ENCODE measurements at regions of chr3 and their contacts with region 1.

Region 1: GRCh38 chr3:38165681-38166392 is 500 bp downstream of the OXSR1 start:
- DNase-seq: no peak
- ATAC-seq: peak; percentile 35
- H3K4me3 ChIP-seq: peak overlapping the region; percentile 73 to 84
- H3K27ac ChIP-seq: peak overlapping the region; percentile 98
- H3K4me1 ChIP-seq: peaks cover 17% of the 10 kb centered on the region
- H3K27me3 ChIP-seq: no peaks in the 10 kb centered on the region
- CTCF ChIP-seq: no peak

Region 2: DNA sequence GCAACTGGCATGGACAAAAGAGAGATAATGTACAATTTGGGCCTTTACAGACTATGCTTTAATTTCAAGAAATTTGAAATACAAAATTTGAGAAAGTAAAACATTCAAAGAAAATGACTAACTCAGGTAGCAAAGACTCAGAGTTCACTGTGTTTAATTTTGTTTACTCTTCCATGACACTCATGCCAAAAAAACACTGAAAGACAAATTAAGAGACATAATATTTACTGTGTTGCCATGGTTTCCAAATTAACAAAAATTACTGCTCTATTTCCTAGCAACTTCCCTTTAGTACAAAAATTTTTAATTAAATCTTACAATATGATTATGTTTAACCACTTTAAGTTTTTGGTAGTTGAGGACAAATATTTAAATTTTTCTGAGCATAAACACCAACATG is 1021.0 kb before region 1 on chr3:
- CTCF ChIA-PET with region 1: no interaction called
- POLR2A ChIA-PET with region 1: no interaction called
- in situ Hi-C with region 1: no loop called
- intact Hi-C with region 1: no loop called
- DNase-seq: no peak
- ATAC-seq: no peak
- H3K4me3 ChIP-seq: no peak overlapping the region
- H3K27ac ChIP-seq: no peak overlapping the region
- H3K4me1 ChIP-seq: no peaks in the 10 kb centered on the region
- H3K27me3 ChIP-seq: no peaks in the 10 kb centered on the region
- CTCF ChIP-seq: no peak

Region 3: DNA sequence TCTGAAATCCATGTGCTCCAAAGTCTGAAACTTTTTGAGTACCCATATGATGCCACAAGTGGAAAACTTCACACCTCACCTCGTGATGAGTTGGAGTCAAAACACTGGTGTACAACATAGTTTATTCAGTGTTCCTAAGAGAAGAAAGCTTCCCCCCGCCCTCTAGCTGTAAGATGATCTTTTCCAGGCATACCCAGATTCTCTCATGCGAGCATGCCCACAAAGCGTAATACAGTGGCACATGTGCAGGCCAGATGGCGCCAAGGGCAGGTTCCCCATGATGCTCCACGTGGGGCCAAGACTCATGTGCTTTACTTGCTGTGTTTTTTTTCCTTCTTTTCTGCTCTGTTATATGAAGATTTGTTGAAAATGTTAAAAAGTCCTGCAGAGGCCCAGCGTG is 886.6 kb before region 1 on chr3:
- CTCF ChIA-PET with region 1: no interaction called
- POLR2A ChIA-PET with region 1: interaction called, 10 read pairs
- in situ Hi-C with region 1: no loop called
- intact Hi-C with region 1: no loop called
- DNase-seq: no peak
- ATAC-seq: no peak
- H3K4me3 ChIP-seq: no peak overlapping the region
- H3K27ac ChIP-seq: no peak overlapping the region
- H3K4me1 ChIP-seq: no peaks in the 10 kb centered on the region
- H3K27me3 ChIP-seq: no peaks in the 10 kb centered on the region
- CTCF ChIP-seq: no peak

Region 4: DNA sequence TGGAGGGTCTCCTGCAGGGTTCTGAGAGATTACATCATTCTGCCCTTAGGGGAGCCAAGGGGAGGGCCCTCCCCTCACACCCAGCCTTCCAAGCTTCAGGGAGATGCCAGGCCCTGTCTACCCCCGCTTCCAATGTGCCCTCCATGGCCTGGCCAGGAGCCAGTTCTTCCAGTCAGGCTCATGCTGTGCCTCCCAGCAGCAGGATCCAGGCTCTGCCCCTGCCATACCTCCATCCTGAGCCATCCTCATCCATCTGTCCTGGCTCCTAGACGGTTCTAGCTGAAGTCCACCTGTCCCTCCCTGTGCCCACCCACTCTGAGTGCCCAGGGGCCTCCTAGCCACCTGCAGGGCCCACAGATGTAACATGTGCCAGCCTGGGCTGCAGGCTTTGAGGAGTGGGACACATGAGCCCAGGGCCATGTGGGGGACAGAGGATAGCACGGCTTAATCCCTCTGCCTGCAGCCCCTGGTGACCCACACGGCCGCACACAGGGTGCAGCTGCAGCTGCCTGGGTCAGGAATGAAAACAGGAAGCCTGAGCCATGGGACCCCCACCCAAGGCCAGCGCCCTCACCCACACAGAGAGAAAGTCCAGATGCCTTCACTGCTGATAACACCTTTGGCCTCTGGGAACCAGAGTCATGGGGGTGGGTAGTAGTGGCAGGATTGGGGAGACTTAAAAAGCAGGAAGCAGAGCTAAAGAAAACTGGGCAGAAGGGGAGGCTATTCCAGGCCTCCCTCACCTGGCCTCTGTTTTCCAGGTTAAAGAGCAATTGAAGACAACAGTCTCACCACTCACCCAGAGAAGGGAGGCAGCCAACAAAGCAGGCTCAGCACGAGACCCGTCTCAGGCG is 148.2 kb before region 1 on chr3:
- CTCF ChIA-PET with region 1: no interaction called
- POLR2A ChIA-PET with region 1: interaction called, 13 read pairs
- in situ Hi-C with region 1: no loop called
- intact Hi-C with region 1: no loop called
- DNase-seq: no peak
- ATAC-seq: no peak
- H3K4me3 ChIP-seq: no peak overlapping the region
- H3K27ac ChIP-seq: no peak overlapping the region
- H3K4me1 ChIP-seq: no peaks in the 10 kb centered on the region
- H3K27me3 ChIP-seq: no peaks in the 10 kb centered on the region
- CTCF ChIP-seq: no peak

Region 5: DNA sequence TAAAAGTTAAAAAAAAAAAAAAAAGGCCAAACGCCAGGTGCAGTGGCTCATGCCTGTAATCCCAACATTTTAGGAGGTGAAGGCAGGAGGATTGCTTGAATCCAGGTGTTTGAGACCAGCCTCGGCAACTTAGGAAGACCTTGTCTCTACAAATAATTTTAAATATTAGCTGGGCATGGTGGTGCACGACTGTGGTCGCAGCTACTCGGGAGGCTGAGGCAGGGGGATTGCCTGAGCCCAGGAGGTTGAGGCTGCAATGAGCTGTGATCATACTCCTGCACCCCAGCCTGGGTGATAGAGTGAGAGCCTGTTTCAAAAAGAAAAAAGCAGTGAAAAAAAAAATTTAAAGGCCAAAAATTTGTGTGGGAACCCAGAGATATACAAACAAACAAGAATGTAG is 129.6 kb before region 1 on chr3:
- CTCF ChIA-PET with region 1: no interaction called
- POLR2A ChIA-PET with region 1: interaction called, 21 read pairs
- in situ Hi-C with region 1: no loop called
- intact Hi-C with region 1: no loop called
- DNase-seq: no peak
- ATAC-seq: no peak
- H3K4me3 ChIP-seq: no peak overlapping the region
- H3K27ac ChIP-seq: no peak overlapping the region
- H3K4me1 ChIP-seq: no peaks in the 10 kb centered on the region; the same call in 1 of the 2 replicates
- H3K27me3 ChIP-seq: no peaks in the 10 kb centered on the region
- CTCF ChIP-seq: no peak

Region 6: DNA sequence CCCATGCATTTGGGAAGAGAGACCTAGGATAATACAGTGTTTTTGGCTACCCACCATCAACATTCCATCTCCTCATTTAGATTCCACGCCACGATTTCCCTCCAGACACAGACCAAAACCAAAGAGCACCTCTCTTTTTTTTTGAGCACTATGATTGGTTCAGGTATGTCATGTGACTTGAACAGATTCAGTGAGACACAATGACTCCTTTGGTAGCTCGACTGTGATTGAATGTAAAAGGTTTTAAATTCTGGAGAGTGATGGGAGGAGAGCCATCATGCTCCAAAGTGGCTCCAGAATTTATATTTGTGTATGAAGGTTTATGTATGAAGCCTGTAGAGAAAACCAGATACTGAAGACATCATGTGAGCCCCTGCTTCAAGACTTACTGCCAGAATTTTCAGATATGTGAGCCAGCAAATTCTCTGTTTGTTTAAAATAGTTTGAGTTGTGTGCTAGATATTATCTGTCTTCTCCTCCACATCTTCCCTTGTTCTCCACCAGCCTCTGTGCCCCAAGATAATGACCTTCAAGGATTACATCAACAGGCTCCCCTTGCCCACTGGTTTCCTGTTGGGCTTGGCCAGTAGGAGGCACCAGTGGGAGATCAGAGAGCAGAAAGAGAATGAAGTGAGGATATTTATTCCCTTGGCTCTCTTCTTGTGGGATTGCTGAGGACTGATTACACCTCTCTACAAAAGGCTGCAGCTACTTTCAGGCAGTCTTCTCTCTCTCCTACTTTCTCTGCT is 14.9 kb before region 1 on chr3:
- CTCF ChIA-PET with region 1: no interaction called
- POLR2A ChIA-PET with region 1: no interaction called
- in situ Hi-C with region 1: no loop called
- intact Hi-C with region 1: no loop called
- DNase-seq: no peak
- ATAC-seq: no peak
- H3K4me3 ChIP-seq: no peak overlapping the region
- H3K27ac ChIP-seq: no peak overlapping the region
- H3K4me1 ChIP-seq: no peaks in the 10 kb centered on the region
- H3K27me3 ChIP-seq: no peaks in the 10 kb centered on the region
- CTCF ChIP-seq: peak; percentile 13; the same call in 1 of the 2 replicates

Region 7: GRCh38 chr3:38519000-38519399 is 353.2 kb after region 1 on chr3:
- CTCF ChIA-PET with region 1: no interaction called
- POLR2A ChIA-PET with region 1: no interaction called
- in situ Hi-C with region 1: no loop called
- intact Hi-C with region 1: no loop called
- DNase-seq: no peak
- ATAC-seq: no peak
- H3K4me3 ChIP-seq: no peak overlapping the region
- H3K27ac ChIP-seq: no peak overlapping the region
- H3K4me1 ChIP-seq: no peaks in the 10 kb centered on the region
- H3K27me3 ChIP-seq: no peaks in the 10 kb centered on the region
- CTCF ChIP-seq: no peak

Region 8: GRCh38 chr3:40024526-40024925 is 1858.7 kb after region 1 on chr3:
- CTCF ChIA-PET with region 1: no interaction called
- POLR2A ChIA-PET with region 1: interaction called, 10 read pairs
- in situ Hi-C with region 1: no loop called
- intact Hi-C with region 1: no loop called
- DNase-seq: no peak
- ATAC-seq: no peak
- H3K4me3 ChIP-seq: no peak overlapping the region
- H3K27ac ChIP-seq: no peak overlapping the region
- H3K4me1 ChIP-seq: no peaks in the 10 kb centered on the region
- H3K27me3 ChIP-seq: no peaks in the 10 kb centered on the region
- CTCF ChIP-seq: no peak